Natural killer cell (primary cell): ENCODE measurements at regions of chr16 and their contacts with region 1.

Region 1: DNA sequence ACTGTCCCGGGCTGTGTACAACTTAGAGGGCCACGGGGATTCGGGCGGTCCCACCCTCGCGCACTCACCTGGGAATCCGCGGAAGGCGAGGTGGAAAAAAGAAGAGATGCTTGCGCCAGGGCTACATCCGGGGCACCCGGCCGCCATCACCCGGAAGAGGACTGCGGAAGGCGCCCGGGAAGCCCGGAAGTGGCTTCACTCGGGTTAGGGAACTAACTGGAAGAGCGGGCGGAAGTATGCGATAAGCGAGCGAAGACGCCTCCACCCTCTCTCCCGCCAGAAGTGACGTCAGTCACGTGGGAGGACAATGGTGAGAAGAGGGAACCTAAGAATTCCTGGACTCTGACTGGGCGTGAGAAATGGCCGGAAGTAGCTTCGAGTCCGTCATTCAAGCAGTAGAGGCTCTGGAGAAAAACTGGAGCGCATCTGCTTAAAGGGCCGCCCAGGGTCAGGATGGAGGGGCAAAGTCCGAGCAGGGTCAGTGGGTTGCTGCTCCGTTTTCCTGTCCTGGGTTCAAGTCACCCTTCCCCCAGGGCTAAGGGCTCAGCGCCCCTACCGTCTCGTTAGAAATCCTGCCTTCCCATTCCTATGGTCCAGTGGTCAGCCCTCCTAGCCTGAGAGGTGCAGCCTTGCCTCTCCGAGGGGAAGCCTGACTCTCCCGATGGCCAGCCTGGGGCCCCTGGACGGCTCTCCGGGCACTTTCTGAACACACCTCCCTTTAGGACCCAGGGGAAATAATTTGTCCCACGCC is at the start of gene CD2BP2:
- DNase-seq: peak; percentile 80 to 96
- ATAC-seq: peak; percentile 57 to 86 (median 78)
- H3K4me3 ChIP-seq: peak within 1 kb of the TSS; percentile 51
- H3K4me3 Mint-ChIP-seq: peak within 1 kb of the TSS; percentile 95
- H3K27ac ChIP-seq: peak within 1 kb of the TSS; percentile 91
- H3K27ac Mint-ChIP-seq: peak within 1 kb of the TSS; percentile 96 to 98
- H3K4me1 ChIP-seq: peaks cover 52% of the 10 kb centered on the region
- H3K4me1 Mint-ChIP-seq: peaks cover 63 to 67% of the 10 kb centered on the region in 2 donors
- H3K27me3 ChIP-seq: no peaks in the 10 kb centered on the region
- H3K27me3 Mint-ChIP-seq: no peaks in the 10 kb centered on the region
- CTCF ChIP-seq: no peak
- total RNA-seq, gene CD2BP2: 79.5 to 104 (median 87.7) TPM

Region 2: GRCh38 chr16:30370444-30371247 is 15.3 kb after region 1 on chr16 and contains the start of gene TBC1D10B:
- intact Hi-C with region 1: loop called (anchors 1 kb)
- DNase-seq: peak; percentile 96 to 99
- ATAC-seq: peak; percentile 82 to 94 (median 82)
- H3K4me3 ChIP-seq: peak within 1 kb of the TSS; percentile 64
- H3K4me3 Mint-ChIP-seq: peak within 1 kb of the TSS; percentile 93
- H3K27ac ChIP-seq: peak within 1 kb of the TSS; percentile 70
- H3K27ac Mint-ChIP-seq: peak within 1 kb of the TSS; percentile 91 to 94
- H3K4me1 ChIP-seq: peaks cover 35% of the 10 kb centered on the region
- H3K4me1 Mint-ChIP-seq: peaks cover 48 to 59% of the 10 kb centered on the region in 2 donors
- H3K27me3 ChIP-seq: no peaks in the 10 kb centered on the region
- H3K27me3 Mint-ChIP-seq: peaks cover 0 to 3% of the 10 kb centered on the region in 2 donors
- CTCF ChIP-seq: no peak
- total RNA-seq, gene TBC1D10B: 43.0 to 55.3 (median 50.2) TPM

Region 3: GRCh38 chr16:30395992-30396585 is 40.8 kb after region 1 on chr16:
- intact Hi-C with region 1: loop called (anchors 2 kb)
- DNase-seq: no peak
- ATAC-seq: peak in 1 of 3 donors; percentile 3
- H3K4me3 ChIP-seq: peak overlapping the region; percentile 52
- H3K4me3 Mint-ChIP-seq: peak overlapping the region; percentile 78
- H3K27ac ChIP-seq: no peak overlapping the region
- H3K27ac Mint-ChIP-seq: peak overlapping the region in 1 of 2 donors; percentile 22
- H3K4me1 ChIP-seq: peaks cover 64% of the 10 kb centered on the region
- H3K4me1 Mint-ChIP-seq: peaks cover 33 to 55% of the 10 kb centered on the region in 2 donors
- H3K27me3 ChIP-seq: no peaks in the 10 kb centered on the region
- H3K27me3 Mint-ChIP-seq: no peaks in the 10 kb centered on the region
- CTCF ChIP-seq: no peak

Region 4: DNA sequence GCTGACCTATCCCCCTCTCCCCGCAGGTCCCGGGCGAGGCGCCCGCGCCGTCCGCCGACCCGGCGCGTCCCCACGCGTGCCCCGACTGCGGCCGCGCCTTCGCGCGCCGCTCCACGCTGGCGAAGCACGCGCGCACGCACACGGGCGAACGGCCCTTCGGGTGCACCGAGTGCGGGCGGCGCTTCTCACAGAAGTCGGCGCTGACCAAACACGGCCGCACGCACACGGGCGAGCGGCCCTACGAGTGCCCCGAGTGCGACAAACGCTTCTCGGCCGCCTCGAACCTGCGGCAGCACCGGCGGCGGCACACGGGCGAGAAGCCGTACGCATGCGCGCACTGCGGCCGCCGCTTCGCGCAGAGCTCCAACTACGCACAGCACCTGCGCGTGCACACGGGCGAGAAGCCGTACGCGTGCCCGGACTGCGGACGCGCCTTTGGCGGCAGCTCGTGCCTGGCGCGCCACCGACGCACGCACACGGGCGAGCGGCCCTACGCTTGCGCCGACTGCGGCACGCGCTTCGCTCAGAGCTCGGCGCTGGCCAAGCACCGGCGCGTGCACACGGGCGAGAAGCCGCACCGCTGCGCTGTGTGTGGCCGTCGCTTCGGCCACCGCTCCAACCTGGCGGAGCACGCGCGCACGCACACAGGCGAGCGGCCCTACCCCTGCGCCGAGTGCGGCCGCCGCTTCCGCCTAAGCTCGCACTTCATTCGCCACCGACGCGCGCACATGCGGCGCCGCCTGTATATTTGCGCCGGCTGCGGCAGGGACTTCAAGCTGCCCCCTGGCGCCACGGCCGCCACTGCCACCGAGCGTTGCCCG is 62.4 kb after region 1 on chr16:
- intact Hi-C with region 1: loop called (anchors 2 kb)
- DNase-seq: peak; percentile 85 to 98
- ATAC-seq: peak; percentile 86 to 97 (median 88)
- H3K4me3 ChIP-seq: peak overlapping the region; percentile 40
- H3K4me3 Mint-ChIP-seq: peak overlapping the region; percentile 67
- H3K27ac ChIP-seq: peak overlapping the region; percentile 77
- H3K27ac Mint-ChIP-seq: peak overlapping the region; percentile 51 to 81
- H3K4me1 ChIP-seq: peaks cover 13% of the 10 kb centered on the region
- H3K4me1 Mint-ChIP-seq: peaks cover 11 to 14% of the 10 kb centered on the region in 2 donors
- H3K27me3 ChIP-seq: no peaks in the 10 kb centered on the region
- H3K27me3 Mint-ChIP-seq: no peaks in the 10 kb centered on the region
- CTCF ChIP-seq: no peak